CD8-positive, alpha-beta memory T cell (primary cell): ENCODE measurements at regions of chr12 and their contacts with region 1.

Region 1: GRCh38 chr12:106136263-106136662 is 2.5 kb downstream of the NUAK1 start:
- DNase-seq: peak; percentile 44 to 73 (median 46)
- H3K4me3 ChIP-seq: no peak overlapping the region
- H3K4me3 Mint-ChIP-seq: peak overlapping the region in 6 of 7 donors; percentile 9 to 80 (median 24)
- H3K27ac ChIP-seq: no peak overlapping the region
- H3K27ac Mint-ChIP-seq: peak overlapping the region in 1 of 8 donors; percentile 30
- H3K4me1 ChIP-seq: peaks cover 5% of the 10 kb centered on the region
- H3K4me1 Mint-ChIP-seq: peaks cover 12 to 32% (median 19%) of the 10 kb centered on the region in 3 donors
- H3K27me3 ChIP-seq: peaks cover 33% of the 10 kb centered on the region
- H3K27me3 Mint-ChIP-seq: peaks cover 40 to 74% of the 10 kb centered on the region in 2 donors

Region 2: GRCh38 chr12:105420659-105421240 is 715.5 kb before region 1 on chr12:
- CTCF ChIA-PET with region 1: interaction called, 21 read pairs
- POLR2A ChIA-PET with region 1: no interaction called
- DNase-seq: peak; percentile 25 to 55 (median 35)
- H3K4me3 ChIP-seq: no peak overlapping the region
- H3K4me3 Mint-ChIP-seq: no peak overlapping the region
- H3K27ac ChIP-seq: no peak overlapping the region
- H3K27ac Mint-ChIP-seq: no peak overlapping the region
- H3K4me1 ChIP-seq: no peaks in the 10 kb centered on the region
- H3K4me1 Mint-ChIP-seq: no peaks in the 10 kb centered on the region
- H3K27me3 ChIP-seq: no peaks in the 10 kb centered on the region
- H3K27me3 Mint-ChIP-seq: no peaks in the 10 kb centered on the region

Region 3: GRCh38 chr12:105960319-105961083 is 175.8 kb before region 1 on chr12:
- CTCF ChIA-PET with region 1: no interaction called
- POLR2A ChIA-PET with region 1: no interaction called
- DNase-seq: no peak
- H3K4me3 ChIP-seq: no peak overlapping the region
- H3K4me3 Mint-ChIP-seq: no peak overlapping the region
- H3K27ac ChIP-seq: no peak overlapping the region
- H3K27ac Mint-ChIP-seq: peak overlapping the region in 4 of 8 donors; percentile 8 to 79 (median 40)
- H3K4me1 ChIP-seq: no peaks in the 10 kb centered on the region
- H3K4me1 Mint-ChIP-seq: no peaks in the 10 kb centered on the region
- H3K27me3 ChIP-seq: no peaks in the 10 kb centered on the region
- H3K27me3 Mint-ChIP-seq: peaks cover 0 to 4% of the 10 kb centered on the region in 2 donors

Region 4: GRCh38 chr12:106096376-106096775 is 39.9 kb before region 1 on chr12:
- CTCF ChIA-PET with region 1: no interaction called
- POLR2A ChIA-PET with region 1: no interaction called
- DNase-seq: no peak
- H3K4me3 ChIP-seq: no peak overlapping the region
- H3K4me3 Mint-ChIP-seq: no peak overlapping the region
- H3K27ac ChIP-seq: no peak overlapping the region
- H3K27ac Mint-ChIP-seq: no peak overlapping the region
- H3K4me1 ChIP-seq: no peaks in the 10 kb centered on the region
- H3K4me1 Mint-ChIP-seq: no peaks in the 10 kb centered on the region
- H3K27me3 ChIP-seq: no peaks in the 10 kb centered on the region
- H3K27me3 Mint-ChIP-seq: peaks cover 10 to 17% of the 10 kb centered on the region in 2 donors

Region 5: GRCh38 chr12:106149096-106149784 is 13.0 kb after region 1 on chr12:
- CTCF ChIA-PET with region 1: interaction called, 11 read pairs
- POLR2A ChIA-PET with region 1: no interaction called
- DNase-seq: no peak
- H3K4me3 ChIP-seq: no peak overlapping the region
- H3K4me3 Mint-ChIP-seq: no peak overlapping the region
- H3K27ac ChIP-seq: no peak overlapping the region
- H3K27ac Mint-ChIP-seq: no peak overlapping the region
- H3K4me1 ChIP-seq: no peaks in the 10 kb centered on the region
- H3K4me1 Mint-ChIP-seq: no peaks in the 10 kb centered on the region
- H3K27me3 ChIP-seq: no peaks in the 10 kb centered on the region
- H3K27me3 Mint-ChIP-seq: peaks cover 3 to 52% of the 10 kb centered on the region in 2 donors